PC-9 (cell line): ENCODE measurements at regions of chr12 and their contacts with region 1.

Region 1: DNA sequence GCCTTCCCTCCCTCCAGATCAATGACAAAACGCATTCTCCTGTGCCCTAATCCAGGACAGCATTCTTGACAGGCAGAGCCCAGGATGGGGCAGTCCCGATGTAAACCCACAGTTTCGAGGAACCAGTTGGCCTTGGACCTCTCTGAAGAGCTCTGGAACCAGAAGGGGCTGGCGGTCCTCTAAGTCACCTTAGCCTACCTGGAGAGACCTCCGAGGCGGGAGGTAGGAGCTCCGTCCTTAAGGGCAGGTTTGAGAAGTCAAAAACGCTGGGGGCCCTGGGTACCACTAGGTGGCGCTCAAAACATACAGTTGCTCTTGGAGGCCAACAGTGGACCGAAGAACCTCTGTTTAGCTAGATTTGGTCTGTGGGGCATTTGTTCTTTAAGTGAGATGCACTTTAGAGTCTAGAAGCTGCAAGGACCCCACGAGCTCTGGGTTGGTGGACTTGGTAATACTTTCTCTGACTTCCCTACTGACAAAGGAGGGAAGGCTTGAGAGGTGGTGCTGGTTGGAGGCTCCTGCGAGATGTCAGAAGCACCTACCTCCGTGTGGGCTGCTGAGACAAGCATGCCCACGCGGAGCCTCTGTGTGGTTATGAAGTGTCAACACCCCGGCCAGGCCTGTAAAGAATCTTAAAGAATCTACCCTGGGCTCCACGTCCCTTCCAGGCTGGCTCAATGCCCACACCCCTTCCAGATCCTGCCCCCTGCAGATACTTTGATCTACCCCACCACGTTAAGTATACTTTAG is 74.8 kb upstream of the CHST11 start:
- DNase-seq: peak; percentile 70 to 73
- H3K4me3 ChIP-seq: no peak overlapping the region
- H3K27ac ChIP-seq: no peak overlapping the region
- H3K4me1 ChIP-seq: peaks cover 20% of the 10 kb centered on the region
- H3K27me3 ChIP-seq: no peaks in the 10 kb centered on the region
- CTCF ChIP-seq: peak; percentile 98

Region 2: GRCh38 chr12:104360987-104361714 is 20.8 kb before region 1 on chr12:
- CTCF ChIA-PET with region 1: no interaction called
- POLR2A ChIA-PET with region 1: no interaction called
- intact Hi-C with region 1: no loop called
- DNase-seq: peak in 1 of 2 experiments; percentile 74
- H3K4me3 ChIP-seq: no peak overlapping the region
- H3K27ac ChIP-seq: no peak overlapping the region
- H3K4me1 ChIP-seq: 0 out of 2 replicates have a peak, but pooled peaks cover 3% of the 10 kb centered on the region
- H3K27me3 ChIP-seq: no peaks in the 10 kb centered on the region
- CTCF ChIP-seq: no peak

Region 3: GRCh38 chr12:104411826-104412641 is 30.1 kb after region 1 on chr12:
- CTCF ChIA-PET with region 1: interaction called, 4 read pairs
- POLR2A ChIA-PET with region 1: interaction called, 10 read pairs
- intact Hi-C with region 1: no loop called
- DNase-seq: peak; percentile 9 to 42
- H3K4me3 ChIP-seq: no peak overlapping the region
- H3K27ac ChIP-seq: no peak overlapping the region
- H3K4me1 ChIP-seq: peaks cover 98% of the 10 kb centered on the region
- H3K27me3 ChIP-seq: no peaks in the 10 kb centered on the region
- CTCF ChIP-seq: no peak

Region 4: GRCh38 chr12:104588068-104588920 is 206.4 kb after region 1 on chr12:
- CTCF ChIA-PET with region 1: interaction called, 8 read pairs
- POLR2A ChIA-PET with region 1: interaction called, 4 read pairs
- intact Hi-C with region 1: loop called (anchors 5 kb)
- DNase-seq: peak; percentile 90 to 98
- H3K4me3 ChIP-seq: peak overlapping the region; percentile 41
- H3K27ac ChIP-seq: peak overlapping the region; percentile 91
- H3K4me1 ChIP-seq: peaks cover 71% of the 10 kb centered on the region
- H3K27me3 ChIP-seq: no peaks in the 10 kb centered on the region
- CTCF ChIP-seq: no peak

Region 5: DNA sequence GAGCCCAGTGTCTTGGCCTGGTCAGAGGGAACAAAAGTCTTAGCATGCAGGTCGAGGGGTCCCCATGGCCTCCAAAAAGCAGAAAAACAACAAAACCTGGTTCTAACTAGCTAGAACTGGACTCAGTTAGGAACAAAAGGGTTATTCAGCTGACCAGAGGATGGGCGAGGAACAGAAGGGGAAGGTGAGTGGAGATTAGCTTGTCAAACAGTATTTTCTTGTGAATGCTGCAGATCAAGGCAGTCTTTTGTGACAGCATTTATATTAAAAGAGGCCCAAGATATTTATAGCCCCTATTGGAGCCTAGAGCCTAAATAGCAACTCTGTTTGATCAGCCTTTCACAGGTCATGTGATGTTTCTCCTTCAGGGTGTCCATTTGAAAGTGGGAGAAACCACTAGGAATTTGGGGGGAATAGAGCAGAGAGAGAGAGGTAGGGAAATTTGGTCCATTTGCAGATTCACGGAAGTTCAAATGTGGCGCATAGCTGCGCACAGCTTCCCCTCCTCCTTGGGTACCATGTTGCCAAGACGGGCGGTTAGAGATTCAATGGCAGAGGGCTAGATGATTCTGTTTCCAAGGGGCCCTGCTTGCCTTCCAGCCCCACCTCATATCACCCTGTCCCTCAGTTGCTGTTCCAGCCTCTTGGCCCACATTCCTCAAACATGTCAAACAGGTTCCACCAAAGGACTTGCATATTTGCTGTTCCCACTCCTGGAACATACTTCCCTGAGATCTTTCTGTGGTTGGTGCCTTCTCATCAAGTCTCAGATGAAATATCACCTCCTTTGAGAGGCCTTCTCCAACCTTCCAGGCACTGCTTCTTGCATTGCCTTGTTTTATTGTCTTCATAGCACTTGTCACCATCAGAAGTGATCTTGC is 295.6 kb after region 1 on chr12:
- CTCF ChIA-PET with region 1: no interaction called
- POLR2A ChIA-PET with region 1: no interaction called
- intact Hi-C with region 1: loop called (anchors 5 kb)
- DNase-seq: peak; percentile 77 to 96
- H3K4me3 ChIP-seq: 0 out of 2 replicates have a peak overlapping the region, but pooled peaks have one; percentile 18
- H3K27ac ChIP-seq: peak overlapping the region; percentile 87
- H3K4me1 ChIP-seq: peaks cover 68% of the 10 kb centered on the region
- H3K27me3 ChIP-seq: no peaks in the 10 kb centered on the region
- CTCF ChIP-seq: no peak